ENCODE measurements at regions of chr11 and their contacts with region 1.

Region 1: DNA sequence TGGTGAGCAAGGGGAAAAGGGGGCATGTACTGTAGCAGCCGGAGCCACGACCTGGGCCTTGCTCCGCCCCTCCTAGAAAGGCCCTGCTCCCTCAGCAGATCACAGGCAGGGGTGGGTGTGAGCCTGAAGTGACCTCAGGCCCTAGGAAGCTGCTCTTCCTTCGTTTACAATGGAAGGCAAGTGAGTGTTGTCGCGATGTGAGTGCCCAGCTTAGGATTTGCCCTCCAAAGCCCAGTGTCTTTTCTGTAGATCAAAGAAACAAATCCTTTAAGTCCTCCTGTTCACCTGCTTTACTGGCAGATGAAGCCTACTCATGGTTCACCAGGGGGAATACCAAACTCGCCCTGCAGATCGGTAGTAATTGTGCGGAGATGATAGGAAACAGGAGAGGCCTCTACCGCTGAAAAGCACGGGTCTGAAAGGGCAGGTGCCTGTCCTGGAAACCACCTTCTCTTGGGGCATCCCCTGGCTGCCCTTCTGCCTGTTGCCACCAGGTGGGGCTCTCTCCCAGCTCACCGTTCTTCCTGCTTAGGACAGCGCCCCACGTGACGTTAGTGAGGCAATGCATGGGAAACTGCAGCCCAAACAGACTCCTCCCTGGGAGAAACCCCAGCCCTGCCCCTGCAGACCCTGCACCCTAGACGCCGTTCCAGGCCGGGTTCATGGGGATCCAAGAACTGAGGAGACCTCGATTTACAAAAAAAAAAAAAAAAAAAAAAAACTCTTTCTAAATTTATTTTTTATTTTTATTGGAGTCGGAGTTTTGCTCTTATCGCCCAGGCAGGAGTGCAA is 45.9 kb upstream of the RAB1B start:
- H3K4me3 ChIP-seq: no peak overlapping the region
- H3K27ac ChIP-seq: no peak overlapping the region
- H3K4me1 ChIP-seq: no peaks in the 10 kb centered on the region
- CTCF ChIP-seq: peak; percentile 98

Region 2: DNA sequence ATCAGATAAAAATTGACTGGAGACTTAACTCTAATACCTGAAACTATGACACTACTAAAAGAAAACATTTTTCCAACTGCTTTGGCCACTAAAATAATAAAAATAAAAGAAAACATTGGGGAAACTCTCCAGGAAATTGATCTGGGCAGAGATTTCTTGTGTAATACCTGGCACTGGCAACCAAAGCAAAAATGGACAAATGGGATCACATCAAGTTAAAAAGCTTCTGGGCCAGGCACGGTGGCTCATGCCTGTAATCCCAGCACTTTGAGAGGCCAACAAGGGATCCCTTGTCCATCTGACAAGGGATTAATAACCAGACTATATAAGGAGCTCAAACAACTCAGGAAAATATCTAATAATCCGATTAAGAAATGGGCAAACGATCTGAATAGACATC is 18.7 kb before region 1 on chr11:
- CTCF ChIA-PET with region 1: interaction called, 10 read pairs
- POLR2A ChIA-PET with region 1: no interaction called
- H3K4me3 ChIP-seq: no peak overlapping the region
- H3K27ac ChIP-seq: no peak overlapping the region
- H3K4me1 ChIP-seq: no peaks in the 10 kb centered on the region
- CTCF ChIP-seq: no peak

Region 3: GRCh38 chr11:66235141-66235540 is 12.6 kb after region 1 on chr11:
- CTCF ChIA-PET with region 1: interaction called, 14 read pairs
- POLR2A ChIA-PET with region 1: no interaction called
- H3K4me3 ChIP-seq: no peak overlapping the region
- H3K27ac ChIP-seq: no peak overlapping the region
- H3K4me1 ChIP-seq: no peaks in the 10 kb centered on the region
- CTCF ChIP-seq: no peak

Region 4: DNA sequence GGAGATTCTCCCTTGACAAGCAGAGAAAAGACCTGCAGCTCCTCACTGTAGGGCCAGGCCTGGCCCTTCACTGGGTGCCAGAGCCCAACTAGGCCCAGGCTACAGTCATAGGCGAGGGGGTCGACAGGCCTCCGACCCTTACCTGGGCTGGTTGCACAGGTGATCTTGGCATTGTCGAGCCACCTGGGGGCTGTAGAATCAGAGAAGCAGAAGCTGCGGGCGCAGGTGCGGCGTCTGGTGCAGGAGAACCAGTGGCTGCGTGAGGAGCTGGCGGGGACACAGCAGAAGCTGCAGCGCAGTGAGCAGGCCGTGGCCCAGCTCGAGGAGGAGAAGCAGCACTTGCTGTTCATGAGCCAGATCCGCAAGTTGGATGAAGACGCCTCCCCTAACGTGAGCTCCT is 39.0 kb after region 1 on chr11:
- CTCF ChIA-PET with region 1: interaction called, 15 read pairs
- POLR2A ChIA-PET with region 1: interaction called, 3 read pairs
- H3K4me3 ChIP-seq: no peak overlapping the region
- H3K27ac ChIP-seq: no peak overlapping the region
- H3K4me1 ChIP-seq: no peaks in the 10 kb centered on the region
- CTCF ChIP-seq: no peak

Region 5: DNA sequence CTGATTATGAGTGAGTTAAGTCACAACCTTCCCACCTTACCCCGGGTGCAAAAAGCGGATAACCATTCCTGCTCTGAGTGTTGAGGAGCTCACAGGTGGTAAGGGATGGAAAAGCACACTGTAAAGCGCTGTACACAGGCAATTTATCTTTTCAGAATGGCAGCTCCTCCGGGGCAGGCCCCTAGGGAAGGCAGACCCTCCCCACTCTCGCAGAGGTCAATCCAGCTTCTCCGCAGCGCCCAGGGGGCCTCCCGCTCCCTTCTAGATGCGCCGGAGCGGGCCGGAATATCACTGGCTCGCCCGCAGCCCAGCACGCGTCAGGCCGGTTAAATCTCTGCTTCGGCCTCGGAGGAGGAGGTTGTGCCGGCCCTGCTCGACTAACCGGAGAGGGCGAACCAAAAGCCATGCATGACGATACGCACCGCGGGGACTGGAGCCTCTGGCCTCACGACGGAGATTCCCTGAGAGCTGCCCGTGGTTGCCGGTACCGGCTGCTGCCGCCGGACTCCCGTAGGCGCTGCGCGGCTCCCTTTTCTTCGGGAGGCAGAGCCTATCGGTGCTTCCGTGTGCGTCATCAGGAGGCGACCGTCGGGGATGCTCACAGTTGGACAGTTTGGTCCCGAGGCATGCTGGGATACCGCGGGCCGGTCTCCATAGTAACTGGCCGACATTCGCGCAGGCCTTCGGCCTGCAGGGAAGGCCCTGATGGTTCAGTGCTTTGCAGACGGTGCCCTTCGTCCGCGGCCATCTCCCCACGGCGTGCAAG is 122.2 kb after region 1 on chr11 and contains the start of gene BRMS1:
- CTCF ChIA-PET with region 1: no interaction called
- POLR2A ChIA-PET with region 1: no interaction called
- H3K4me3 ChIP-seq: peak within 1 kb of the TSS; percentile 52
- H3K27ac ChIP-seq: peak within 1 kb of the TSS; percentile 26; the same call in 1 of the 2 replicates
- H3K4me1 ChIP-seq: no peaks in the 10 kb centered on the region
- CTCF ChIP-seq: 0 out of 2 replicates have a peak, but pooled peaks have one; percentile 25

Region 6: GRCh38 chr11:66510271-66510989 is 287.9 kb after region 1 on chr11 and contains the start of gene BBS1:
- CTCF ChIA-PET with region 1: no interaction called
- POLR2A ChIA-PET with region 1: no interaction called
- H3K4me3 ChIP-seq: peak within 1 kb of the TSS; percentile 90
- H3K27ac ChIP-seq: no peak within 1 kb of the TSS
- H3K4me1 ChIP-seq: no peaks in the 10 kb centered on the region
- CTCF ChIP-seq: no peak

Measured in HEK293 (cell line).